Esophagus muscularis mucosa (tissue), 4 donors: ENCODE measurements at regions of chr19 and their contacts with region 1.

Region 1: GRCh38 chr19:28737021-28737895 is 475.7 kb downstream of the UQCRFS1 start:
- DNase-seq: no peak
- H3K4me3 ChIP-seq: peak overlapping the region in 1 of 4 donors; percentile 10
- H3K27ac ChIP-seq: no peak overlapping the region
- H3K4me1 ChIP-seq: peaks cover 0 to 12% (median 9%) of the 10 kb centered on the region in 4 donors
- H3K27me3 ChIP-seq: no peaks in the 10 kb centered on the region
- CTCF ChIP-seq: peak; percentile 48 to 60 (median 58)
- EP300 ChIP-seq: no peak
- POLR2A ChIP-seq: no peak

Region 2: GRCh38 chr19:28878862-28879566 is 141.8 kb after region 1 on chr19:
- intact Hi-C with region 1: loop called (anchors 2 kb)
- DNase-seq: no peak
- H3K4me3 ChIP-seq: no peak overlapping the region
- H3K27ac ChIP-seq: no peak overlapping the region
- H3K4me1 ChIP-seq: peaks cover 9 to 16% (median 13%) of the 10 kb centered on the region in 4 donors
- H3K27me3 ChIP-seq: peaks cover 0 to 4% (median 0%) of the 10 kb centered on the region in 4 donors
- CTCF ChIP-seq: peak; percentile 66 to 75 (median 74)
- EP300 ChIP-seq: no peak
- POLR2A ChIP-seq: no peak

Region 3: DNA sequence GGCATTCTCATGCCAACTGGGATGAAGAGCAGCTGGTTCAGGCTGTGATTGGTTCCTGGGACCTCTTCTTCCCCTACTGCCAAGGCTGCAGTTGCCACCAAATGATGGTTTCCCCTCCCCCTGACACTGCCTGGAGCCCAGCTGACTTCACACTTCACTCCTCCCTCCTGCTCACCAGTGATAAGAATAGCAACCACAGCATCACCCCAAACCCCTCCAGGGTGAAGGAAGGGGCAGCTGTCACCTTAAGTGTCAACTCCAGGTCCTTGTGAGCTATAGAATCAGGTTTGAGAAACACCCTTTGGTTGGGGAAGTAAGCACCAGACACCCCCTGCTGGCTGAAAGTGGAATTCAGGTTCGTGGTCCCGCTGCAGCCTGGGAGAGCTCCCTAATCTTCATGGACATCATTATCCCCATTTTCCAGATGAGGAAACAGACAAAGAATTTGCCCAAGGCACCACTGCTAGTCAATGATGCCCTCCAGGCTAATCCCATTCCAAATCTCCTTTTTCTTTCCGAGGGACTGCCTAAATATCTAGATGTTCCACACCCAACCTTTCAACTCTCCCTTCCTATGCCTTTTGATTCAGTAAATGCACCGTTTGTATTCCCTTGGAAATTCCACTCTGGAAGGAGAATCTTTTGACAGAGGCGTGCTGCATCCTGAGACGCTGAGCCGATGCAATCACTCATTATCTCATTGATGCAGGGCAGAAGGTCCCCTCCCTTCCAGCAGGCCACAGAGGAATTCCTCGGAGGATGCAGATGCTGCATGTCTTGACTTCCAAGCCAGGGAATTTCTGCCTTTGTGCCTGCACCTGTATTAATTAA is 526.3 kb after region 1 on chr19:
- intact Hi-C with region 1: loop called (anchors 5 kb)
- DNase-seq: no peak
- H3K4me3 ChIP-seq: no peak overlapping the region
- H3K27ac ChIP-seq: no peak overlapping the region
- H3K4me1 ChIP-seq: no peaks in the 10 kb centered on the region
- H3K27me3 ChIP-seq: peaks cover 0 to 64% (median 0%) of the 10 kb centered on the region in 4 donors
- CTCF ChIP-seq: peak; percentile 52 to 72 (median 67)
- EP300 ChIP-seq: no peak
- POLR2A ChIP-seq: no peak